ENCODE measurements at regions of chr22 and their contacts with region 1.

Region 1: DNA sequence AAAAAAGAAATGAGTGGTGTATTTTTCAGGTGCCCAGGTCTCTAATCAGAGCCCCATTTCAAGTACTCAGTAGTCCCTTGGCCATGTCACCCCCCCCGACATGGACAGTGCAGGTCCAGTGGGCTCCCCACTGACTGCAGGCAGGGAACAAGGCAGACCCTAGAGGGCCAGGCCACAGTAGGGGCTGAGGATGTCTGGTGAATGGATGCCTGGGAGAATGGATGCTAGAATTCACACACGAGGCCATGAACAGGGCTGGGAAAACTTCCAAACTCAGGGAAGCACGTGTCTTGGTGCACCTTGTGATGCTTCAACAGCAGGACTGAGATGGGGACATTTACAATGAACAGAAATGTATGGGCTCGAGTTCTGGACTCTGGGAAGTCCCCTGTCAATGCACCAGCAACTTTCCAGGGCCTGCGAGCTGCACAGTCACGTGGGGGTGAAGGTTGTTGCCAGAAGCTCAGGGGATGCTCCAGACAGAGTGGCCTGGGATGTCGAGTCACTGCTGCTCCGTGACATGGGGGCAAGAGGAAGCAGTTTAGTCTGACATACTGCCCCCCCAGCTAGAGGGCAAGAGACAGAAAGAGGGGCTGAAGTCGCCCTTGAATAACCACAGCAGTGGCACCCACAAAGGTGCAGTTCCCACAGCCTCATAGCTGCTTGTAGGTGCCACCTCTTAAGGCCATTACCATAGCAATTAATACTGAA is 3.1 kb downstream of the APOBEC3G start:
- DNase-seq: peak in 3 of 14 experiments; percentile 43 to 67 (median 63)
- ATAC-seq: no peak
- H3K4me3 ChIP-seq: no peak overlapping the region
- H3K4me3 Mint-ChIP-seq: peak overlapping the region; percentile 42
- H3K27ac ChIP-seq: no peak overlapping the region
- H3K27ac Mint-ChIP-seq: no peak overlapping the region
- H3K4me1 ChIP-seq: peaks cover 84% of the 10 kb centered on the region
- H3K4me1 Mint-ChIP-seq: peaks cover 31% of the 10 kb centered on the region
- H3K27me3 ChIP-seq: no peaks in the 10 kb centered on the region
- H3K27me3 Mint-ChIP-seq: no peaks in the 10 kb centered on the region
- CTCF ChIP-seq: no peak

Region 2: GRCh38 chr22:38755911-38756532 is 324.2 kb before region 1 on chr22 and contains the start of gene SUN2:
- CTCF ChIA-PET with region 1: no interaction called
- POLR2A ChIA-PET with region 1: no interaction called
- intact Hi-C with region 1: no loop called
- DNase-seq: peak; percentile 85 to 96 (median 94)
- ATAC-seq: peak; percentile 63
- H3K4me3 ChIP-seq: peak within 1 kb of the TSS; percentile 98
- H3K4me3 Mint-ChIP-seq: peak within 1 kb of the TSS; percentile 99
- H3K27ac ChIP-seq: peak within 1 kb of the TSS; percentile 75 to 81
- H3K27ac Mint-ChIP-seq: peak within 1 kb of the TSS; percentile 99
- H3K4me1 ChIP-seq: peaks cover 73% of the 10 kb centered on the region
- H3K4me1 Mint-ChIP-seq: peaks cover 69% of the 10 kb centered on the region
- H3K27me3 ChIP-seq: no peaks in the 10 kb centered on the region
- H3K27me3 Mint-ChIP-seq: no peaks in the 10 kb centered on the region
- CTCF ChIP-seq: no peak
- total RNA-seq, gene SUN2: 440 to 453 TPM

Region 3: GRCh38 chr22:39003165-39003638 is 77.0 kb before region 1 on chr22:
- CTCF ChIA-PET with region 1: no interaction called
- POLR2A ChIA-PET with region 1: no interaction called
- intact Hi-C with region 1: no loop called
- DNase-seq: peak; percentile 51 to 91 (median 64)
- ATAC-seq: peak; percentile 83
- H3K4me3 ChIP-seq: no peak overlapping the region
- H3K4me3 Mint-ChIP-seq: no peak overlapping the region
- H3K27ac ChIP-seq: no peak overlapping the region
- H3K27ac Mint-ChIP-seq: no peak overlapping the region
- H3K4me1 ChIP-seq: peaks cover 16% of the 10 kb centered on the region
- H3K4me1 Mint-ChIP-seq: peaks cover 9% of the 10 kb centered on the region
- H3K27me3 ChIP-seq: no peaks in the 10 kb centered on the region
- H3K27me3 Mint-ChIP-seq: no peaks in the 10 kb centered on the region
- CTCF ChIP-seq: peak; percentile 80

Region 4: GRCh38 chr22:39013942-39014722 is 66.1 kb before region 1 on chr22 and contains the start of gene APOBEC3C:
- CTCF ChIA-PET with region 1: no interaction called
- POLR2A ChIA-PET with region 1: no interaction called
- intact Hi-C with region 1: loop called in 1 of 2 experiments (anchors 5 kb)
- DNase-seq: peak; percentile 42 to 89 (median 68)
- ATAC-seq: peak; percentile 84
- H3K4me3 ChIP-seq: peak within 1 kb of the TSS; percentile 75
- H3K4me3 Mint-ChIP-seq: peak within 1 kb of the TSS; percentile 88
- H3K27ac ChIP-seq: peak within 1 kb of the TSS; percentile 65 to 70
- H3K27ac Mint-ChIP-seq: peak within 1 kb of the TSS; percentile 84
- H3K4me1 ChIP-seq: peaks cover 45% of the 10 kb centered on the region
- H3K4me1 Mint-ChIP-seq: peaks cover 43% of the 10 kb centered on the region
- H3K27me3 ChIP-seq: no peaks in the 10 kb centered on the region
- H3K27me3 Mint-ChIP-seq: no peaks in the 10 kb centered on the region
- CTCF ChIP-seq: no peak
- total RNA-seq, gene APOBEC3C: 13.9 to 14.8 TPM

Region 5: GRCh38 chr22:39055658-39056057 is 24.5 kb before region 1 on chr22:
- CTCF ChIA-PET with region 1: no interaction called
- POLR2A ChIA-PET with region 1: no interaction called
- intact Hi-C with region 1: no loop called
- DNase-seq: no peak
- ATAC-seq: no peak
- H3K4me3 ChIP-seq: no peak overlapping the region
- H3K4me3 Mint-ChIP-seq: no peak overlapping the region
- H3K27ac ChIP-seq: no peak overlapping the region
- H3K27ac Mint-ChIP-seq: no peak overlapping the region
- H3K4me1 ChIP-seq: no peaks in the 10 kb centered on the region
- H3K4me1 Mint-ChIP-seq: no peaks in the 10 kb centered on the region
- H3K27me3 ChIP-seq: no peaks in the 10 kb centered on the region
- H3K27me3 Mint-ChIP-seq: no peaks in the 10 kb centered on the region
- CTCF ChIP-seq: no peak

Region 6: GRCh38 chr22:39090426-39091064 is 10.3 kb after region 1 on chr22:
- CTCF ChIA-PET with region 1: interaction called, 3 read pairs
- POLR2A ChIA-PET with region 1: interaction called, 19 read pairs
- intact Hi-C with region 1: no loop called
- DNase-seq: peak; percentile 72 to 95 (median 84)
- ATAC-seq: peak; percentile 79
- H3K4me3 ChIP-seq: peak overlapping the region; percentile 29
- H3K4me3 Mint-ChIP-seq: peak overlapping the region; percentile 39
- H3K27ac ChIP-seq: peak overlapping the region; percentile 85 to 95
- H3K27ac Mint-ChIP-seq: peak overlapping the region; percentile 99
- H3K4me1 ChIP-seq: peaks cover 94% of the 10 kb centered on the region
- H3K4me1 Mint-ChIP-seq: peaks cover 80% of the 10 kb centered on the region
- H3K27me3 ChIP-seq: no peaks in the 10 kb centered on the region
- H3K27me3 Mint-ChIP-seq: no peaks in the 10 kb centered on the region
- CTCF ChIP-seq: no peak

Region 7: DNA sequence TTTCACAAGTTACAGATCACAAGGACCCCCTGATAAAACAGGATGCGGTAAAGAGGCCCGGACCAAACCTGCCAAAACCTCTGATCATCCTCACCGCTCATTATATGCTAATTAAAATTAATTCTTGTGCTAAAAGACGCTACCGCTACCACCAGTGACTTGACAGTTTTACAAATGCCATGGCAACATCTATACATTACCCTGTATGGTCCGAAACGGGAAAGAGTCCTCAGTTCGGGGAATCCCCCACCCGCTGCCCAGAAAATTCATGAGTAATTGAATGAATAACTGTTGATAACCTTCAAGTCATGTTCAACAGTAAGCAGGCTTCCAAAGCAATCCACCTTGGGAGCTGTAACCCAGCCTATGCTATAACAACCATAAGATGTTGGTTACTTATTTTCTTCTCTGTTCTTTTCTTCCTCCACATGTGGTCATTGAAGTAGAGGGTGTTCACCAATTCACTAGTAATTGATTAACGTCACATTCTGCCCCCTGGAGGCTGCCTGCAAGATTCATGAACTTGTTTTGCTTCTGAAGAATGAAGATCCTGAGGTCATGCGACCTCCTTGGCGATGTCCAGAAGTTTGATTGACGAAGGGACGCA is 37.5 kb after region 1 on chr22:
- CTCF ChIA-PET with region 1: no interaction called
- POLR2A ChIA-PET with region 1: no interaction called
- intact Hi-C with region 1: loop called (anchors 5 kb)
- DNase-seq: peak; percentile 54 to 85 (median 67)
- ATAC-seq: peak; percentile 56
- H3K4me3 ChIP-seq: peak overlapping the region; percentile 9
- H3K4me3 Mint-ChIP-seq: peak overlapping the region; percentile 27
- H3K27ac ChIP-seq: peak overlapping the region; percentile 45 to 49
- H3K27ac Mint-ChIP-seq: peak overlapping the region; percentile 67
- H3K4me1 ChIP-seq: peaks cover 29% of the 10 kb centered on the region
- H3K4me1 Mint-ChIP-seq: peaks cover 21% of the 10 kb centered on the region
- H3K27me3 ChIP-seq: no peaks in the 10 kb centered on the region
- H3K27me3 Mint-ChIP-seq: no peaks in the 10 kb centered on the region
- CTCF ChIP-seq: peak; percentile 81

Region 8: GRCh38 chr22:39195436-39195835 is 115.2 kb after region 1 on chr22:
- CTCF ChIA-PET with region 1: no interaction called
- POLR2A ChIA-PET with region 1: no interaction called
- intact Hi-C with region 1: no loop called
- DNase-seq: no peak
- ATAC-seq: no peak
- H3K4me3 ChIP-seq: no peak overlapping the region
- H3K4me3 Mint-ChIP-seq: no peak overlapping the region
- H3K27ac ChIP-seq: no peak overlapping the region
- H3K27ac Mint-ChIP-seq: no peak overlapping the region
- H3K4me1 ChIP-seq: no peaks in the 10 kb centered on the region
- H3K4me1 Mint-ChIP-seq: no peaks in the 10 kb centered on the region
- H3K27me3 ChIP-seq: no peaks in the 10 kb centered on the region
- H3K27me3 Mint-ChIP-seq: no peaks in the 10 kb centered on the region
- CTCF ChIP-seq: no peak